ENCODE measurements at regions of chr10 and their contacts with region 1.

Region 1: GRCh38 chr10:101141616-101142532 is 10.8 kb downstream of the TLX1 start:
- DNase-seq: peak; percentile 91
- ATAC-seq: peak; percentile 49
- H3K4me3 Mint-ChIP-seq: no peak overlapping the region; the same call in 1 of the 2 replicates
- H3K27ac Mint-ChIP-seq: no peak overlapping the region
- H3K4me1 Mint-ChIP-seq: peaks cover 24% of the 10 kb centered on the region
- H3K27me3 Mint-ChIP-seq: peaks cover 100% of the 10 kb centered on the region
- CTCF ChIP-seq: peak; percentile 95

Region 2: GRCh38 chr10:100890673-100891317 is 251.1 kb before region 1 on chr10:
- CTCF ChIA-PET with region 1: no interaction called
- POLR2A ChIA-PET with region 1: no interaction called
- DNase-seq: no peak
- ATAC-seq: peak; percentile 61
- H3K4me3 Mint-ChIP-seq: no peak overlapping the region
- H3K27ac Mint-ChIP-seq: no peak overlapping the region
- H3K4me1 Mint-ChIP-seq: peaks cover 14% of the 10 kb centered on the region
- H3K27me3 Mint-ChIP-seq: peaks cover 6% of the 10 kb centered on the region; the same call in 1 of the 2 replicates
- CTCF ChIP-seq: no peak

Region 3: GRCh38 chr10:100945754-100946153 is 196.1 kb before region 1 on chr10:
- CTCF ChIA-PET with region 1: no interaction called
- POLR2A ChIA-PET with region 1: no interaction called
- DNase-seq: no peak
- ATAC-seq: no peak
- H3K4me3 Mint-ChIP-seq: no peak overlapping the region
- H3K27ac Mint-ChIP-seq: no peak overlapping the region
- H3K4me1 Mint-ChIP-seq: no peaks in the 10 kb centered on the region
- H3K27me3 Mint-ChIP-seq: no peaks in the 10 kb centered on the region
- CTCF ChIP-seq: no peak

Region 4: DNA sequence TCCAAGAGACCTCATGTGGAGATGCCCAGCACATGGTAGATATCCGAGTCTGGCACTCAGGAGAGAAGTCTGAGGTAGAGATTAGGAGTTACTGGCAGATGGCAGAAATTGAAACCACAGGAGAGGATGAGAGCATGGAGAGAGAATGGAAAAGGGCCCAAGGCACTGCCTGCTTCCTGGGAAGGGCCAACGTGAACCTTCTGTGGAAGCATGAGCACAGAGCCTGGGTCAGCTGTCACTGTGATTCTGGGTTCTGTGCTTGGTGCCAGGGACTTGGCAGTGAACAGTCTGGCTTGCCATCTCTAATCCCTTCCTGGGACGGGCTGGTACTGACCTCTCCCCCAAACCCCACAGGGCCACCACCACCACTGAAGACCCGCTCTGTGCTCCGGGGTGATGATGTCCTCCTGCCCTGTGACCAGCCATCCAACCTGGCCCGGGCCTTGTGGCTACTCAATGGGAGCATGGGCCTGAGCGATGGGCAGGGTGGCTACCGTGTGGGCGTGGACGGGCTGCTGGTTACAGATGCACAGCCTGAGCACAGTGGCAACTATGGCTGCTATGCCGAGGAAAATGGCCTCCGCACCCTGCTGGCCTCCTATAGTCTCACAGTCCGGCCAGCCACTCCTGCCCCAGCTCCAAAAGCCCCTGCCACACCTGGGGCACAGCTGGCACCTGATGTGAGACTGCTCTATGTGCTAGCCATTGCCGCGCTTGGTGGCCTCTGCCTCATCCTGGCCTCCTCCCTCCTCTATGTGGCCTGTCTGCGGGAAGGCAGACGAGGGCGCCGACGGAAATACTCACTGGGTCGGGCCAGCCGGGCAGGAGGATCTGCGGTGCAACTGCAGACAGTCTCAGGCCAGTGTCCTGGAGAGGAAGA is 158.7 kb before region 1 on chr10:
- CTCF ChIA-PET with region 1: no interaction called
- POLR2A ChIA-PET with region 1: no interaction called
- DNase-seq: no peak
- ATAC-seq: no peak
- H3K4me3 Mint-ChIP-seq: no peak overlapping the region
- H3K27ac Mint-ChIP-seq: no peak overlapping the region
- H3K4me1 Mint-ChIP-seq: peaks cover 13% of the 10 kb centered on the region
- H3K27me3 Mint-ChIP-seq: no peaks in the 10 kb centered on the region
- CTCF ChIP-seq: no peak

Region 5: GRCh38 chr10:101031128-101031795 is 110.6 kb before region 1 on chr10 and contains the starts of genes PDZD7 and SFXN3:
- CTCF ChIA-PET with region 1: interaction called, 41 read pairs
- POLR2A ChIA-PET with region 1: no interaction called
- DNase-seq: peak; percentile 97
- ATAC-seq: peak; percentile 88
- H3K4me3 Mint-ChIP-seq: peak within 1 kb of the TSS; percentile 75
- H3K27ac Mint-ChIP-seq: no peak within 1 kb of the TSS
- H3K4me1 Mint-ChIP-seq: peaks cover 36% of the 10 kb centered on the region
- H3K27me3 Mint-ChIP-seq: peaks cover 55% of the 10 kb centered on the region
- CTCF ChIP-seq: no peak
- total RNA-seq, gene PDZD7: 1.9 to 2.7 TPM (median 2.6 TPM) in 3 replicates
- total RNA-seq, gene SFXN3: 2.5 to 5.6 TPM (median 3.2 TPM) in 3 replicates

Region 6: GRCh38 chr10:101060036-101060950 is 81.6 kb before region 1 on chr10:
- CTCF ChIA-PET with region 1: interaction called, 181 read pairs
- POLR2A ChIA-PET with region 1: interaction called, 3 read pairs
- DNase-seq: peak; percentile 90
- ATAC-seq: peak; percentile 43
- H3K4me3 Mint-ChIP-seq: peak overlapping the region; percentile 97
- H3K27ac Mint-ChIP-seq: peak overlapping the region; percentile 98
- H3K4me1 Mint-ChIP-seq: peaks cover 38% of the 10 kb centered on the region
- H3K27me3 Mint-ChIP-seq: peaks cover 38% of the 10 kb centered on the region
- CTCF ChIP-seq: peak; percentile 84

Region 7: DNA sequence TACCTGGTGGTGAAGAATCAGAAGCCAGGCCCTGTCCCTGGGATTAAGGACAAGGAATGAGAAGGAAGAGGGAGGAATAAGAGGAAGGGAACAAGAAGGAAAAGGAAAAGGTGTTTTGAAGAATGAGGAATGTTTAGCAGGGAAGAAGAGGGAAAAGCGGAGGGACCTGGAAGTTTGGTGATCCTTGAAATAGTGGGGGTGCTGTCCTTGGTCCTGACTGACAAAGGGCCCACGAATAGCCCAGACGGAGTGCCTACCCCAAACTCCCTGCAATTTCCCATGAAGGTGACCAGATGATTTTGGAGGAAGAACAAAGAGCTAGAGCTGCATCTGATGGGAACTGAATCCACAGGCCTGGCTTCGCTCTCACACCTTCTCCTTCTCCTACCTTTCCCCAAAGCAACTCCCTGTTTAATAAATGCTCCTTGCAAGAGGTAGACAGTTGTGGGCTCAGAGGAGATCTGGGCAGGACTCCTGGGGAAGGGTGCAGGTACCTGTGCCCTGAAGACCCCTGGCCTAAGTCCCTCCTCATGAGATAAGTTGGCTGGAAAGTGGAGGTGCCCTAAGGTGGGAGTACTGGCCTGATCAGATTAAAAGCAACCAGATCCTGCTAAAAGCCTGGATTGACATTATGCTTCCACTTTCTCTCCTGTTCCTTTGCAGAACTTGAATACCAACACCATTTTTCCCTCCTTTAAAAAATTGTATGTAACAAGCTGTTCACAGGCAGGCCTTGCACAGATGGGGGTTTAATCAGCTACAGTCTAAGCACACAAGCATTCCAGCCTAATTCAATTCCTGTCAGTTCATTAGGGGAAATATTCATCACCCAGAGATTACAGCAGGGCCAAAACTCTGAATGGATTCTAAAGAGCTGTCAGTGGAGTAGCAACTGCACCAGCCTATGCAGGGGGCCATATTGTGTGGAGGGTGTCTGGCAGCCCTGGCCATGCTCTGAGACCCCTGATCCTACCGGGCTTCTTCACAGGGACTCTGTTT is 60.6 kb before region 1 on chr10:
- CTCF ChIA-PET with region 1: interaction called, 23 read pairs
- POLR2A ChIA-PET with region 1: no interaction called
- DNase-seq: peak; percentile 66
- ATAC-seq: peak; percentile 75
- H3K4me3 Mint-ChIP-seq: no peak overlapping the region
- H3K27ac Mint-ChIP-seq: no peak overlapping the region
- H3K4me1 Mint-ChIP-seq: peaks cover 3% of the 10 kb centered on the region
- H3K27me3 Mint-ChIP-seq: peaks cover 64% of the 10 kb centered on the region
- CTCF ChIP-seq: no peak

Region 8: GRCh38 chr10:101110856-101111546 is 30.9 kb before region 1 on chr10:
- CTCF ChIA-PET with region 1: interaction called, 20 read pairs
- POLR2A ChIA-PET with region 1: no interaction called
- DNase-seq: no peak
- ATAC-seq: peak; percentile 72
- H3K4me3 Mint-ChIP-seq: no peak overlapping the region
- H3K27ac Mint-ChIP-seq: no peak overlapping the region
- H3K4me1 Mint-ChIP-seq: peaks cover 25% of the 10 kb centered on the region
- H3K27me3 Mint-ChIP-seq: peaks cover 7% of the 10 kb centered on the region
- CTCF ChIP-seq: no peak

Region 9: GRCh38 chr10:101161494-101162299 is 19.8 kb after region 1 on chr10:
- CTCF ChIA-PET with region 1: interaction called, 60 read pairs
- POLR2A ChIA-PET with region 1: no interaction called
- DNase-seq: peak; percentile 83
- ATAC-seq: peak; percentile 96
- H3K4me3 Mint-ChIP-seq: peak overlapping the region; percentile 55
- H3K27ac Mint-ChIP-seq: no peak overlapping the region; the same call in 1 of the 2 replicates
- H3K4me1 Mint-ChIP-seq: peaks cover 37% of the 10 kb centered on the region
- H3K27me3 Mint-ChIP-seq: peaks cover 52% of the 10 kb centered on the region
- CTCF ChIP-seq: peak; percentile 97

Region 10: GRCh38 chr10:101291331-101292193 is 149.7 kb after region 1 on chr10:
- CTCF ChIA-PET with region 1: interaction called, 12 read pairs
- POLR2A ChIA-PET with region 1: interaction called, 3 read pairs
- DNase-seq: peak; percentile 87
- ATAC-seq: peak; percentile 65
- H3K4me3 Mint-ChIP-seq: peak overlapping the region; percentile 80
- H3K27ac Mint-ChIP-seq: no peak overlapping the region
- H3K4me1 Mint-ChIP-seq: peaks cover 39% of the 10 kb centered on the region
- H3K27me3 Mint-ChIP-seq: peaks cover 97% of the 10 kb centered on the region
- CTCF ChIP-seq: peak; percentile 80

Measured in WTC11 (cell line).